Cardiac septum (tissue), 1 donor: ENCODE measurements at regions of chr18 and their contacts with region 1.

Region 1: GRCh38 chr18:57748770-57749603 is 54.1 kb downstream of the ATP8B1 start:
- DNase-seq: no peak

Region 2: DNA sequence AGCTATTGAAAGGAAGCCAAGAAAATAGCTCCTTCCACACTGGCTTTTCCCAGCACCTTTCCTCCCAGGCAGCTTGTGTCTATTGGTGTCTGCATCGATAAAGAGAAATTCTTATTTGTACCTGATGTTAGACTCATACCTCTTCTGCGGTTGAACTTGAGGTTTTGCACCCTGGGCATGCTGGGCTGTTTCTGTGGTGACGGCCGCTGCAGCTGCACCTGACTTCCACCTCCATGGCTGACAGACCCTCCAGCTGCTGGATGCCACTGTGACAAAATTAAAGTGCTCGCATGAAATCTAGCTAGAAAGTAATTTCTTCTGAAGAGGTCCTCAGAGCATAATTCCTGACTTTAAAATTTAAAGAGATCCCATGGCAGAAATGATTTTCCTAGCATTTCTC is 169.1 kb before region 1 on chr18:
- intact Hi-C with region 1: no loop called
- DNase-seq: no peak

Region 3: DNA sequence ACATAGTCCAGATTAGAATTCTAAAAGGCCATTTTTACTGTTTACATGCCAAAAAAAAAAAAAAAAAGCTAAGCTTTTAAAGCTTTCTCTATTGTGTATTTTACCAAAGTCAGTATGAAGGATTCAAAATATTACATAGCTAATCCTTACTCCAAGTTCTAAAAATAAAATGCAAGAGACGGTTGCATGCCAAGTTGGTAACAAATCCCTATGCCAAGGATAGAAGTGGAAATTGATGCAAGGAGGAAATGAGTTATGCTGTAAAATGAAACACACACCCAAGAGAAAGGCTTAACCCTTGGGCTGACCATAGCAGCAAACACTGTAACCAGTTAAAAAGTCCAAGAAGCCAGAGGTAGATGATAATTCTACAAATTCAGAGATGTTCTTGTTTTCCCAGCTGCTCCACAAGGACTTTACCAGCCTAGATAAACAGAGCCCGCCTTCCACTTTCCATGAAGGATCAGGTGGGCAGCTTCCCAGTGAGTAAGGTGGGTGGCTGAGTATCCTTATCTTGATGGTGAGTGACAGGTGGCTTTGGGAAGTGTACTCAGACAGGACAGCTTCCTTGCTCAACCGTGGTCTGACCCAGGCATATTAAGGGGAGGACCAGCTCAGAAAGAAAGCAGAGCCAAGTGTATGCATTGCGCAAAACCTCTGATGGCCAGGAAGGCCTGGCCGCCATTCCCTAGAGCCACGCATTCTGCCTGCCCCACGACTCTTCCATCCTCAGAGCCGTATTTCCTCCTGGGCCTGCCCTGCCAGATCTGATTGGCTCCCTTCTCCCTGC is 19.7 kb after region 1 on chr18:
- intact Hi-C with region 1: loop called (anchors 1 kb)
- DNase-seq: no peak

Region 4: DNA sequence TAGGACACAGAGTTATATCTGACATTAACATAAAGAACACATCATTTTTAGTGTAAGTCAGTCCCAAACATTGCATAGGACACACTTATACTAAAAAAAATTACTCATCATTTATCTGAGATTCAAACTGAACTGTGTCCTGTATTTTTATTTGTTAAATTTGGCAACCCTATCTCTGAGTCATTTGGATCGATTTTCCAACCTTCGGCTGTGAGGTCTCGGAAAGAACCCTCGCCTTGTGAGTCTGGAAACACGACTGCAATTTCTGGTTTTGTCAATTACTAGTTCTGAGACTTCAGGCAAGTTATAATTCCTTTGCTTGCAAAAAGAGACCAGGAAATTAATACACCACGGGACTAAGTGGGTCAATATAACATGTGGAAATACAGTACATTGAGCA is 40.1 kb after region 1 on chr18:
- intact Hi-C with region 1: loop called (anchors 1 kb)
- DNase-seq: no peak